AG04450 (cell line): ENCODE measurements at regions of chr2 and their contacts with region 1.

Region 1: GRCh38 chr2:237256887-237257286 is 157.1 kb downstream of the COL6A3 start:
- DNase-seq: no peak
- H3K4me3 ChIP-seq: no peak overlapping the region
- H3K27ac ChIP-seq: peak overlapping the region; percentile 98
- H3K27me3 ChIP-seq: no peaks in the 10 kb centered on the region
- CTCF ChIP-seq: no peak

Region 2: DNA sequence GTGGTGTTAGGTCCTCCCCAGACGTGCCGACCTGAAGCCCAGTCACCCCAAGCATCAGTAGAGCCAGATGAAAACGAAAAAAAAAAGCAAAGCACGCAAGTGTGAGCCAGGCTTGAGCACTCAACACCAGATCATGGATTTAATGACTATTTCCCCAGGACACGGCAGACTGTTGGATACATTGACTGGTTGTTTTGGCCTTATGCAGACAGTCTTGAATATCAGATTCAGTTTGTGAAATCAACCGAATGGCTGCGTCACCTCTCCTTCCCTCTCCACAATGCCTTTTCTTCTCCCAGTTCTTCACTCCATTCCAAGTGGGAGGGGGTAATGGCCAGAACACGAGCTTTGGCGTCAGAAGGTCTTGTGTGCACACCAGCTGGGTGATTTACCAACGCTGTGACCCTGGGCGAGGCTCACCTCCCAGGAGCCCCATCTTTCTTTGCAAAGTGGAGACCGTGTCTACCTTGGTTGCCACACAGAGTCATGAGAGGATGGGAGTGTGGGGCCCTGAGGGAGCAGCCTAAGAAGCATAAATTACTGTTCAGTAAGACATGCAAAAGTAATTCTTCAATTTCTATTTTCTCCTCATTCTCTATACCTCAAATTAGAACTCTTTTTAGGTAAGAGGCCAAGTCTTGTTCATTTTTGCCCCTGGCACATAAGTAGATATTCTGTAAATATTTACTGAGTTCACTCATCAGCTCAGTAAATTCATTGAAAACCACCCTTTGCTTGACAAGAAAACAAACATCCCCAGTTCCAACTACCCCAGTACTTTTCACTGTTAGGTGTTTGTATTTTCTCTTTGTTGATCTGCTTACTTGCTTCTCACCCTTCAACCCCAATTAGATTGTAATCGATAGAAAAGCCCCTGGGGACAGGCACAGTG is 352.3 kb before region 1 on chr2:
- CTCF ChIA-PET with region 1: no interaction called
- POLR2A ChIA-PET with region 1: no interaction called
- DNase-seq: no peak
- H3K4me3 ChIP-seq: no peak overlapping the region
- H3K27ac ChIP-seq: no peak overlapping the region
- H3K27me3 ChIP-seq: peaks cover 22% of the 10 kb centered on the region
- CTCF ChIP-seq: no peak

Region 3: DNA sequence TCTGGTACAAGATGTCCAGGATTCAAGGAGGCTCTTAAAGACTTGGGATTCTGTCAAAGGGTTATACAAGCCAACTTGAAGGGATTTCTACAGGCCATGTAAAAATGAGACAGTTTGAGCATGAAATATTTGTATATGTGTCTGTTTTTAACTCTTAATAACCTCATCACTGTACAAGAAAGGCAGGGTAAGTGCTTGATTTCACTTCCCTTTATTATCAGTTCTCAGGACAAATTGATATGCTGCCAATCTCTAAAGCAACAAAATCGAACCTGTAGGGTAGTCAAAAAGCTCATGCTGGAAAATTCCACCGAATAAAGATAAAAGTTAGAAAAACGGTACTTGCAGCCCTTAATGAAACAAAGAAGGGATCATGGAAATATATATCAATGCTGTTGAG is 157.1 kb before region 1 on chr2:
- CTCF ChIA-PET with region 1: no interaction called
- POLR2A ChIA-PET with region 1: no interaction called
- DNase-seq: no peak
- H3K4me3 ChIP-seq: no peak overlapping the region
- H3K27ac ChIP-seq: no peak overlapping the region
- H3K27me3 ChIP-seq: no peaks in the 10 kb centered on the region
- CTCF ChIP-seq: no peak

Region 4: DNA sequence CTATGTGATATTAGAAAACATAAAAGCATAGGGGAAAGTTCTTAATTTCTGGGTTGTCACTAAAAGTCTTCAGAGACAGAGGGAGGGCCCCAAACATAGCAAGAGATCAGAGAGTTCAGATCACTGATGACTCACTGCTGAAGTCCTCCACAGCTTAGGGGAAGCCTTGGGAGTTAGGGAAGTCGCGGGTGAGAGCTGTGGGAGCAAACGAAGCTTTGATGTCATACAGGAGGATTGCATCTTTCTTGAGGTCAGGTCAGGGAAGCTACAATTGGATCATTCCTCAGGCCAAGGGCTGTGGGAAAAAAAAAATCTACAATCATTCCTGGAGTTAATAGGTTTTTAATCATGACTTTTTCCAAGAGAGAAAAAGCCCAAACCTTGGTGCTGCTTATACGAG is 75.0 kb before region 1 on chr2:
- CTCF ChIA-PET with region 1: interaction called, 11 read pairs
- POLR2A ChIA-PET with region 1: interaction called, 8 read pairs
- DNase-seq: peak; percentile 94
- H3K4me3 ChIP-seq: no peak overlapping the region
- H3K27ac ChIP-seq: peak overlapping the region; percentile 99
- H3K27me3 ChIP-seq: no peaks in the 10 kb centered on the region
- CTCF ChIP-seq: no peak

Region 5: DNA sequence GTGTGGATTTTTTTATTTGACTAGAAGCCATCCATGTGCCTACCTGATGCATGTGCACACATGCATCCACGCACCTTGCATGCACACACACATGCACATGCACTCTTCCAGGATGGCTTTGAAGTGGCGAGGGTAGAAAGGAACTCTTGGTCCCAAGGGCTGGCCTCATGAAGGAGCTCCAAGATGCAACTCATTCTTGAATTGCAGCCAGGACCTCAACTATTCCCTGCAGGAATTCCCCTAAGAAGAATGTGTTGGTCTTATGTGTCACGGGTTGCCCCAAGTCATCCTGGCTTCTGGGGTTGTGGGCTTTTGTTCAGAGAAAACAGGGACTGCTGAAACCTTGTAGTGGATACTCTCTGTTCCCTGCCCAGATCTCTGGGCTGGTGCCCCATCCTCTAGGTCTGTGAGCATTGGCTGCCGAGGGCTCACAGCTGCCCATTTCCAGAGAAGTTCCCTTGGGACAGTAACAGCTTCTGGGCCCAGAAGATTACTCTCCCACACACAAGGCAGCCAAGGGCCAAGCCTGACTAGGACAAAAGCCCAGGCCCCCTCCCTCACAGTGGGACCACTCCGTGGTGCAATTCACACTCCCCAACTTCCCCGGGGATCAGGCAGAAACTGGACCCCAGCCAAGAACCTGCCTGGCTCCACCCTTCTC is 33.6 kb before region 1 on chr2:
- CTCF ChIA-PET with region 1: interaction called, 3 read pairs
- POLR2A ChIA-PET with region 1: interaction called, 21 read pairs
- DNase-seq: peak; percentile 95
- H3K4me3 ChIP-seq: no peak overlapping the region
- H3K27ac ChIP-seq: peak overlapping the region; percentile 100
- H3K27me3 ChIP-seq: no peaks in the 10 kb centered on the region
- CTCF ChIP-seq: no peak

Region 6: DNA sequence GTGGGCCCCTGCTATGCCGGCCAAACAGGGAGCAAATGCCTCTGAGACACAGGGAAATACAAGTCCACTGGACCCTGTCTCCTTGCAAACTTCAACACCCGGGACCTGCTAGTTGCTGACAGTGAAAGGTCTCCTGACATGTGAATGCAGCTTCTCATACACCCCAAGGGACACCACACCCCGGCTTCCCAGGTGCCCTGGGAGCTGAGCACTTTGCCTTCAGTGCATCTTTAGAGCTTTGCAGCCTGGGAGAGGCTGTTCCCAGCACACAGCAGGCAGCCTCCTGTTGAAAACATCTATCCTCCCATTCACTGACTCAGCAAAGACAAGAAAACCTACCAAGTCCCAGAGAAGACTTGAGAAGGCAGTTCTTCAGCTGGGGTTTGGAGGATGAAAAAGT is 13.6 kb after region 1 on chr2:
- CTCF ChIA-PET with region 1: interaction called, 12 read pairs
- POLR2A ChIA-PET with region 1: interaction called, 6 read pairs
- DNase-seq: no peak
- H3K4me3 ChIP-seq: no peak overlapping the region
- H3K27ac ChIP-seq: no peak overlapping the region
- H3K27me3 ChIP-seq: no peaks in the 10 kb centered on the region
- CTCF ChIP-seq: no peak

Region 7: DNA sequence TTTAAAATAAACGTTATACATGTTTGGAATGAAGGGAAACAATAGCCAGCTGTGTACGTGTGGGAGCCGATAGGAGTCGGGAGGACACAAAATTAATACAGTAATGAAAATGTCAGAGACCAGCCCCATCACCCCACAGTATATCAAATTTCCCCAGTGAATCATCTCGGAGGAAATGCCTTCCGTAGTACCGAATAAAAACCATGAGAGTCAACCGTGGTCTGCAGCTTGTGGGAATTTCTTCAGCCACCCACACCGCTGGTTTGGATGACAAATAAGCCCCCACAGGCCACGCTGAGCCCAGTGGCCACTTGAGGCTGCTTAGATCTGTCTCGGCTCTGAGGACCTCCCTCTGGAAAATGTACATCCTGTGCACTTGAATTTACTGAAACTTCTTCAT is 23.3 kb after region 1 on chr2:
- CTCF ChIA-PET with region 1: no interaction called
- POLR2A ChIA-PET with region 1: interaction called, 12 read pairs
- DNase-seq: peak; percentile 97
- H3K4me3 ChIP-seq: no peak overlapping the region
- H3K27ac ChIP-seq: peak overlapping the region; percentile 99
- H3K27me3 ChIP-seq: no peaks in the 10 kb centered on the region
- CTCF ChIP-seq: 0 out of 2 replicates have a peak, but pooled peaks have one; percentile 11

Region 8: DNA sequence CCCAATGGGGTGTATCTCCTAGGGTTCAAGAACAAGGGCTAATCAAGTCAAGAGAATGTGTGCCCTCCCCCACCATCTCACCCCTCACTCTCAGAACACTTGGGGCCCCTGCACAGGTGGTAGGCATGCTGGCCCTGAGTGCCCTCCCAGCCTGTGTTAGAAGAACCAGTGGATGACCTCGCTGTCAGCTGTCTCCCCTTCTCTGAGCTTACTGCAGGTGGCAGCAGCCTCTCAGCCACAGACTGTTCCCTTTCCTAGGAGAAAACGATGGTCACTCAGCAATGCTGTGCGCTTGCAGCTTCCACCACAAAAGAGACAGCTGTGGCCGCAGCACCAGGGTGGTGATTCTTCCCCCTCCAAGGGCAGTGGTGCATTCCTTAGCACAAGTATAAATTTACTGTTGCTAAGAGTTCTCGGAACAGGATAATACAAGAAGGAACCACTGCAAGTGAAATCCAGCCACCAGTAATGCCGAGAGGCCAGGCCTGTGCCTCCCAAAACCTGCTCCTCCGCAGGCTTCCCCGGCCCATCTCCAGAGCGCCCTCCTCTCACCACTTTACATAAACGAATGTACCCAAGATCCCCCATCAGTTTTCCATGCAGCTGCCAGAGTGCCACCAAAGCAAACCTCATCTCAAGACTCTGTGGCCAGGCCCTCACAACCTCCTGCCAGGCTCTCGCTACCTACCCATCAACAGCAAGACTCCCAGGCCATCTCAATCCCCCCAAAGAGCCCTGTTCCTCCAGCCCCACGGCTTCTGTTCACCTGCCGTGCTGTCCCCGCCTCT is 601.6 kb after region 1 on chr2:
- CTCF ChIA-PET with region 1: no interaction called
- POLR2A ChIA-PET with region 1: no interaction called
- DNase-seq: peak; percentile 78
- H3K4me3 ChIP-seq: peak overlapping the region; percentile 43; the same call in 1 of the 2 replicates
- H3K27ac ChIP-seq: no peak overlapping the region
- H3K27me3 ChIP-seq: peaks cover 4% of the 10 kb centered on the region
- CTCF ChIP-seq: peak; percentile 95